ENCODE measurements at regions of chr11 and their contacts with region 1.

Region 1: GRCh38 chr11:102341844-102342318 is 5.1 kb upstream of the BIRC2 start:
- DNase-seq: peak; percentile 78
- ATAC-seq: peak; percentile 86
- H3K4me3 ChIP-seq: no peak overlapping the region
- H3K27ac ChIP-seq: no peak overlapping the region
- H3K4me1 ChIP-seq: peaks cover 30% of the 10 kb centered on the region
- H3K27me3 ChIP-seq: no peaks in the 10 kb centered on the region; a peak in 1 of 5 replicates
- CTCF ChIP-seq: peak; percentile 92
- EP300 ChIP-seq: no peak
- POLR2A ChIP-seq: no peak
- RAD21 ChIP-seq: peak; percentile 65

Region 2: DNA sequence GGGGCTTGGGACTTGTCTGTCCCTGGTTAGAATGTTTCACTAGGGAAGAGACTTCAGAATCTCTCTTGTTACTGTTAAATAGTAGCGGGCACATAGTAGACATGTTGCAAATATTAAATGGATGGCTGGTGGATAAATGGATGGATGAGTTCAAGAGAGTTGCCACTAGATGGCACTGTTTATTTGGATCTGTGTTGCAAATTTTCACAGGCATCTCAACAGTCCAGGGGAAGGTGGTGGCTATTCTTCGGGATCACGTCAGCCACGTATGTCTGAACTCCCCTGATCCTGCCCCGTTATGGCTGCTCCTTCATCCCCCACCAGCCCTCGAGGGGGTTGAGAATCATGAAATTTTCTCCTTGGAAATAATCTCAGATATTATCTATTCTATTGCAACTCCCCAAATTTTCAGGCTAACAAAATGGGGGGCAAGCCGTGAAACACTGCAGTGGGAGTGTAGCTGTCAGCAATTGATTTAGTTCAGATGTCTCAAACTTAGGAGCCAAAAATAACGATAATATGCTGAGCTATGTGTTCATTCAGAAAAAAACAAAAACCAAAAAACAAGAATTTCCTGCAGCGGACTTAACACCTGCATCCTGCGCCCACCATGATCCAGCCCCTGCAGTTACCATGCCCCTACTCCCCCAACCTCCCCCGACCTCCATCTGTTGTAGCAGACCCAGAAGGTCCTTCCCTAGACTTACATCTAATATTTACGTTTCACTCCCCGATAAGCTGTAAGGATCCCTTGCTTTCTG is 53.7 kb before region 1 on chr11:
- CTCF ChIA-PET with region 1: interaction called, 10 read pairs
- POLR2A ChIA-PET with region 1: no interaction called
- in situ Hi-C with region 1: no loop called
- intact Hi-C with region 1: loop called (anchors 2 kb)
- DNase-seq: peak; percentile 68
- ATAC-seq: peak; percentile 86
- H3K4me3 ChIP-seq: no peak overlapping the region
- H3K27ac ChIP-seq: no peak overlapping the region
- H3K4me1 ChIP-seq: peaks cover 55% of the 10 kb centered on the region
- H3K27me3 ChIP-seq: no peaks in the 10 kb centered on the region
- CTCF ChIP-seq: peak; percentile 85
- EP300 ChIP-seq: 0 out of 4 replicates have a peak, but pooled peaks of 1 of the 2 experiments have one; percentile 13
- POLR2A ChIP-seq: no peak
- RAD21 ChIP-seq: peak; percentile 74

Region 3: GRCh38 chr11:102330231-102330630 is 11.7 kb before region 1 on chr11:
- CTCF ChIA-PET with region 1: no interaction called
- POLR2A ChIA-PET with region 1: no interaction called
- in situ Hi-C with region 1: no loop called
- intact Hi-C with region 1: no loop called
- DNase-seq: no peak
- ATAC-seq: no peak
- H3K4me3 ChIP-seq: no peak overlapping the region
- H3K27ac ChIP-seq: no peak overlapping the region
- H3K4me1 ChIP-seq: no peaks in the 10 kb centered on the region
- H3K27me3 ChIP-seq: no peaks in the 10 kb centered on the region
- CTCF ChIP-seq: no peak
- EP300 ChIP-seq: no peak
- POLR2A ChIP-seq: no peak
- RAD21 ChIP-seq: no peak

Region 4: DNA sequence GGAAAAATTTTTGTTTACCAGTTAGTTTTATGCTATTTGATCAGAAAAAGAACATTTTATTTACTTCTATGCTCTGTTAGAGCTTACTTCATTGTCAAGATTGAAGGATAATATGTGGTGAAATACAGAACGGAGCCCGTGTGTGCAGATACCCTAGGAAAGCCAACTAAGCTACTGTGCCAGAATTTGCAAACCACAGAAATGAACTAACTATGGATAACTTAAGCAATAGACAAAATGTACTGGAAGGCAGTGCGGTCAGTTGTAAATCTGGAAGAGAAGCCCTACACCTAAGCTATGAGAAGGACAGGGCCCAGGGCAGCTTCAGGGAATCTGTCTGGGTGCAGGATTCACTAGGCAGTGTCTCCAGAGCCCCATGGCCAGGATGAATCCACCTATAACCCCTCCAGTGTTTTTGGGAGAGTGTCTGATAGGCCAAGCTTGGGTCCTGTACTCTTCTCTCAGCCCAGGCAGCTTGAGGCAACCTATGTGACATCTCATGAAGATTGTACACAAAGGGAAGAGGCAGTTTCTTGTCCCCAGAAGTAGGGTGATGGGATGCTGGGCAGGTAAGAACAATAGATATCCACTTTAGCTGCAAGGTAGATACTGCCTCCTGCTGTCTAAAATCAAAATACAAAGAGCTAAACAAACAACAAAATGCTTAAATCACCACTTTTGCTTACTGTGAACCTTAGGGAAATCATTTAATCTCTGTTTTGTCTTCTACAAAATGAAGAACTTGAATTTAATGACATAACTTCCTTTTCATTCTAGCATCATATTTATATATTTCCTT is 176.6 kb after region 1 on chr11:
- CTCF ChIA-PET with region 1: interaction called, 5 read pairs
- POLR2A ChIA-PET with region 1: no interaction called
- in situ Hi-C with region 1: no loop called
- intact Hi-C with region 1: loop called (anchors 5 kb)
- DNase-seq: no peak
- ATAC-seq: peak; percentile 40; the same call in 2 of the 3 replicates
- H3K4me3 ChIP-seq: no peak overlapping the region
- H3K27ac ChIP-seq: no peak overlapping the region
- H3K4me1 ChIP-seq: peaks cover 18% of the 10 kb centered on the region
- H3K27me3 ChIP-seq: no peaks in the 10 kb centered on the region
- CTCF ChIP-seq: peak; percentile 50
- EP300 ChIP-seq: no peak
- POLR2A ChIP-seq: no peak
- RAD21 ChIP-seq: peak; percentile 35; the same call in 1 of the 2 replicates